Body of pancreas (tissue), 4 donors: ENCODE measurements at regions of chr22 and their contacts with region 1.

Region 1: DNA sequence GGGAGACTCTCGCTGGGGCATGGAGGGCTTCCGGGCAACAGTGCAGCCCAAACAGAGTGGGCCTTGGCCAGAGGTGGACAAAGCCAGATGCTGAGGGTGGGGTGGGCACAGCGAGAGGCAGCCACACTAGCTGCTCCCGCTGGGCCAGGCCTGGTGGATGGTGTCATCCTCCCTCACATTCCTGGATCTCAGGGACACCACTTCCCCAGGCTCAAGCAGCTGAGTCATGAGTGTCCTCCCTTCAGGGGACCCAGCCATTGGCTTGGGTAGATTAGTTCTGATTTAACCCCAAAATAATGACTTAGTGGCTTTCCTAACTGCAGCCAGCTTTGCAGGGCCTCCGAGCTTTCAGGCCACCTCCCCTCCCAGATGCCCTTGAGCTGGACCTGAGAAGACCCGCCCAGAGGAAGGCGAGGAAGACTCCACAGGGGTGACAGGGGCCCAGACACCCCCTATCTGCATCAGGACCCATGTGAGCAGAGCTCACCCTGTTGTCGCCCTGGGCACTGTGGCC is 25.9 kb upstream of the WNT7B start:
- DNase-seq: peak in 1 of 4 donors; percentile 26
- ATAC-seq: no peak
- H3K4me3 ChIP-seq: no peak overlapping the region
- H3K27ac ChIP-seq: no peak overlapping the region
- H3K4me1 ChIP-seq: peaks cover 20% of the 10 kb centered on the region
- H3K27me3 ChIP-seq: no peaks in the 10 kb centered on the region
- CTCF ChIP-seq: no peak
- POLR2A ChIP-seq: no peak

Region 2: DNA sequence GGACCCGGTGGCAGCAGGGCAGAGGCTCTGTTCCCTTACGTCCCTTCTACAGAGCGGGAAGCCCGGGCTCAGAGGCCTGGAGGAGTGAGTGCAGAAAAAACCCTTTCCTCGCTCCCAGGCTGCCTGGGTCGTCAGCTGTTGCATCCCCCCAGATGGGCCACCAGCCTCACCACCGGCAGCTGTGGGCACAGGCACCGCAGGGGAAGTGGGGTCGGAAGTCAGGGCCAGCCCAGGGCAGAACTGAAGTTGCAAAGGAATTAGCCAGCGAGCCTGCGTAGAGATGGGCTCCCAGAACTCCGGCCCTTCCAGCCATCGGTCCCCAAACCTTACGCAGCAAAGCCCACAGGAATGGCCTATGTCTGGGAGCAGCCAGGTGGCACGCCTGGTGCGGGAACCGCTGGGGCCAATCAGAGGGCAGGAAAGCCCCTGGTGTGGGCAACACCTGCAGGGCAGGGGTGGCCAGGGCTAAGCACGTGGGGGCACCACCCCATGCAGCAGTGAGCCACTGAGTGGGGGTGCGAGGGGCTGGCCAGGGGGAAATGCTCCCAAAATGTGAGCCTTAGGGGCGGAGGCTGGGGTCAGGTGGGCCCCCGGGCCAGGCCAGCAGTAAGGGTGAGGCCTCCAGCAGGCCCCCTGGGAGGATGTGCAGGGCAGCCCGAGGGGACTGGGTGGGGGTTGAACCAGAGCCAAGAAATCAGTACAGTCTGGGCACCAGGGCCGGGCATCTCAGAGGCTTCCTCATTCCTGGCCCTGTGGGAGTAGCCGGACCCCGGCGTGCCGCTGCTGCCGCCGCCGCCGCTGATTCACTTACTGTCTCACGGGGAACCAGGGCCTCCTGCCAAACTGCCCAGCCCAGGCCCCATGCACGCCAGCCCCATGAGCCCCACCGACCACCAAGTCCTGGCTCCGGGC is 84.1 kb before region 1 on chr22:
- intact Hi-C with region 1: no loop called
- DNase-seq: peak; percentile 44 to 82 (median 68)
- ATAC-seq: peak; percentile 69
- H3K4me3 ChIP-seq: no peak overlapping the region
- H3K27ac ChIP-seq: peak overlapping the region; percentile 62 to 88 (median 82)
- H3K4me1 ChIP-seq: peaks cover 57% of the 10 kb centered on the region
- H3K27me3 ChIP-seq: no peaks in the 10 kb centered on the region
- CTCF ChIP-seq: no peak
- POLR2A ChIP-seq: no peak

Region 3: DNA sequence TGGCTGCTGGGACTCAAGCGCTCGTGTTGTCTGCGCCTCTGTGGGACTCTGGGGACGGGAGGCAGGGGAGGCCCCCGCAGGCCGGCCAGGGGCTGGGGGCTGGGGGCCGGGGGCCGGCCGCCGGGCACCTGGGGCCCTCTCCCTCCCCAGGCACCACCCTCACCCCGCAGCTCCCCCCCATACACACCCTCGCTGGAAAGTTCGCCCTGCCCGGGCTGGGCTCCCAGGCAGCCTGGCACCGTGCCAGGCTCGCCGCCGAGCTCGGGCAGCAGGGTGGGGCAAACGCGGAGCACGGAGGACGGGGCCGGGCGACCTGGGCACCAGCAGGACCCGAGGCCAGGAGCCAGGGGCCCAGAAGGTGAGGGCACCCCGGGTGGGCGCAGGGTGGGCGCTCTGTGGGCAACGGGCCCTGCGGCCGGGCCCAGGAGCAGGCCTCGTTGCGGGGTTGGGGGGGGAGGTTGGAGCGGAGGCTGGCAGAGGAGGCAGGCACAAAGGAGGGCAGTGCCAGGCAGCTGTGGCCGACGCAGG is 50.8 kb after region 1 on chr22:
- intact Hi-C with region 1: no loop called
- DNase-seq: peak; percentile 79 to 84 (median 83)
- ATAC-seq: peak; percentile 76
- H3K4me3 ChIP-seq: peak overlapping the region; percentile 38 to 43
- H3K27ac ChIP-seq: peak overlapping the region; percentile 84 to 100 (median 98)
- H3K4me1 ChIP-seq: peaks cover 88% of the 10 kb centered on the region
- H3K27me3 ChIP-seq: no peaks in the 10 kb centered on the region
- CTCF ChIP-seq: no peak
- POLR2A ChIP-seq: peak in 2 of 3 donors; percentile 34 to 59

Region 4: GRCh38 chr22:46116491-46116958 is 113.7 kb after region 1 on chr22:
- intact Hi-C with region 1: loop called (anchors 5 kb)
- DNase-seq: peak; percentile 95 to 98 (median 96)
- ATAC-seq: peak; percentile 85
- H3K4me3 ChIP-seq: no peak overlapping the region
- H3K27ac ChIP-seq: peak overlapping the region; percentile 59 to 79 (median 71)
- H3K4me1 ChIP-seq: peaks cover 63% of the 10 kb centered on the region
- H3K27me3 ChIP-seq: no peaks in the 10 kb centered on the region
- CTCF ChIP-seq: peak; percentile 90 to 99 (median 97)
- POLR2A ChIP-seq: peak in 1 of 3 donors; percentile 22